ENCODE measurements at regions of chr13 and their contacts with region 1.

Region 1: DNA sequence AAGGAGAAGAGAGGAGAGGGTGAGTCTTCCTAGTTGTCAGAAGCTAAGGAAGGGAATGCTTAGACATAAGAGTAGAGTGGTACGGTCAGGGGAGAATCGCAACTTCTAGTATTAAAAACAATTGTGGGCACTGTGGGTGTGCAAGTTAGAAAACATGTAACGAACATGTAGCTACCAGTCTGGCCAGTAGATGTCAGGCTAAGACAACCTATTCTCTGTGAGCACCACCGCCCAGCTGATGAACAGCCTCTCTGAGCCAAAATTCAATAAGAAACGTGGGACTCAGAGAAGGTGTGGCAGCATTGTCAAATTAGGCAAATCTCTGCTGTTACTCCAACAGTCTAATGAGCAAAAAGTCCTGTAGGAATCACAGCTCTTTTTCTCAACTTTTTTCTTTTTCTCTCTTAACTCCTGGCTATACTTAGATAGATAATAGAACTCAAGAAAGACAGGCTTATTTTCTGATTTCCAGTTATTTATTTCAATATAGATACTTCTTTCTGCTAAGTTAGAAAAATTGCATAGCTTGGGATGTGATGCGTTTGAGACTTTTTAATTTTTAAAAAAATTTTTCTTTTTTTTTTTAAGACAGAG is 186.2 kb downstream of the USP12 start:
- DNase-seq: peak; percentile 77
- CTCF ChIP-seq: peak; percentile 78

Region 2: DNA sequence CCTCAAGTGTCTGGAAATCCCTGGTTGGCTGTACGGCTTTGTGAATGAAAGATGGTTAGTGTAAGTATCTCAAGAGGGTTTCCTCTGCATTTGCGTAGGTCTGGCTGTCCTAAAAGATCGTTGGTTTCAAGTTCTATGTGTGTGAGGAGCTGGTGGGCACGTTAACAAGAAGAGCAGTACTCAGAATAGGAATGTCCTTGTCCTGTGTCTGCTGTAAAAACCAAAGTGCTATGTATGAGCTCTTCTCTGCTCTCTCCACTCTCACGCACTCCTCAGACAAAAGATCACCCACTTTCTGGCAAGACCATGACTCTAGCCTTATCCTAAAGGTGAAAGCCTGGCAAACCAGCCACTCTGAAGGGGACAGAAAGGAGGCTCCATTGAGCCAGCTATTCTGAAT is 147.2 kb after region 1 on chr13:
- in situ Hi-C with region 1: no loop called
- DNase-seq: no peak
- CTCF ChIP-seq: no peak

Region 3: GRCh38 chr13:27341616-27342015 is 356.2 kb after region 1 on chr13:
- in situ Hi-C with region 1: loop called (anchors 10 kb)
- DNase-seq: no peak
- CTCF ChIP-seq: no peak

Measured in GM13977 (cell line).